Caco-2 (cell line): ENCODE measurements at regions of chr16 and their contacts with region 1.

Region 1: DNA sequence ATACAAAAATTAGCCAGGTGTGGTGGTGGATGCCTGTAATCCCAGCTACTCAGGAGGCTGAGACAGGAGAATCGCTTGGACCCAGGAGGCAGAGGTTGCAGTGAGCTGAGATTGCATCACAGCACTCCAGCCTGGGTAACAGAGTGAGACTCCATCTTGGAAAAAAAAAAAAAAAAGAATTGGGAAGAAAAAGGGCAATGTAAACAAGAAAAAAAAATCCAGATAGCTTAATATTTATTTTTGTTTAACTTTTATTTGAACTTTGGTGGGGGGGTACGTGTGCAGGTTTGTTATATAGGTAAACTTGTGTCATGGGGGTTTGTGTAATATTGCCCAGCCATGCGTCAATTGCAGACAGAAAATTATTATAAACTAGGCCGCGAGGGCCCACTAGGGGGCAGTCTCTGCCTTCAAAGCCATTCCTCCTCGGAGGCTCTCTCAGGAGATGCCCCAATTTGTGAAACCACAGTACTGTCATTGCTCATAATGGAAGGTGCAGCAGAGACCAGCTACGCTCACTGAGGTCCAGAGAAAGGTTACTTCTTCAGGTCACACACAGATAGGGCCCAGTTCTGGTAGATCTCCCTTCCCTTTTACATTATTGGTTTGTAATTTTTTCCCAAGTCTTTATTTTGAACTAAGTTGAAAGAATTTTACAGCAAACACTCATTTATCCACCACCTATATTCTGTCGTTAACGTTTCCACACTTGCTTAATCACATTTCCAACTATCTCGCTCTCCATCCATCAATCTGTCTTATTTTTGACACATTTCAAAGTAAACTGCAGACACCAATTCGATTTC is 206.2 kb downstream of the PRKCB start:
- DNase-seq: peak; percentile 56 to 73
- H3K4me3 ChIP-seq: no peak overlapping the region
- H3K4me3 Mint-ChIP-seq: no peak overlapping the region
- H3K27ac Mint-ChIP-seq: no peak overlapping the region
- H3K4me1 ChIP-seq: no peaks in the 10 kb centered on the region
- H3K4me1 Mint-ChIP-seq: no peaks in the 10 kb centered on the region
- H3K27me3 ChIP-seq: no peaks in the 10 kb centered on the region
- H3K27me3 Mint-ChIP-seq: peaks cover 2% of the 10 kb centered on the region
- CTCF ChIP-seq: peak; percentile 67 to 68

Region 2: DNA sequence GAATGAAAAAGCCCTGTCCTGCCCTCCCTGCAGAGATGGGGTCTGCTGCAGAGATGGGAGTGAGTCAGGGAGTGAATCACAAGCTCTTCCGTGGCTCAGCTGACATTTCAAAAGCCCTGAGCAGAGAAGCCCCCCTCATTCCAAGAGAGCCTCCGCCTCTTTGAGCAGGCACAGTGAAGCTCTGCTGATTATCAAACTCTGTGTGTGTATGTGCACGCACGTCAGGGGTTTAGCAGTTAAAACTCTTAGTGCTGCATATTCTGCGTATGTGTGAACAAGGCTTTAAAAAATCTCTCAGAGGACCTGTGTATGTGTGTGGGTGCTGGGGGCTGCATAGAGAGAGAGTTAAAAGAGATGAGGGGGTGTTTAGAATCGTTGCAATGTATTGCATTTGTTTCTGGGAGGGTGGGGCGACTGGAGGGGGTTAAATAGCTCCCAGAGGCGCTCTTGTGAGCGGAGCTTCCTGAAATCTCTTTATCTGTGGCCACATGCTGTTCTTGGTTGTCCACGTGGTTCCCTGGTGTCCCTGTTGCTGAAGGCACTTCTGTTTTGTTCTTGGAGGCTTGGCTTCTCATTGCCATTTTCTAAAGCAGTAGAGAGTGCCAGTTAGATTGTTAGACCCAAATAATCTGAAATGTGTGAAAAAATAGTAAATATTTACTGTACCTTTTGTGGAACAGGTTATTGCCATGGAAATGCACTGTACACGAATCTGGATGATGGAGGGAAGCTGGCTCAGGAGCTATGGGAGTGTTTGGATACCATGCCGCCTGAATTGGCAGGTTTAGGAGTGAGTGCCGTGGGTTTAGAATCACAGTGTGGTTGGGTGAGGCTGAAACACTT is 89.7 kb before region 1 on chr16:
- CTCF ChIA-PET with region 1: no interaction called
- POLR2A ChIA-PET with region 1: no interaction called
- intact Hi-C with region 1: no loop called
- DNase-seq: no peak
- H3K4me3 ChIP-seq: no peak overlapping the region
- H3K4me3 Mint-ChIP-seq: no peak overlapping the region
- H3K27ac Mint-ChIP-seq: no peak overlapping the region
- H3K4me1 ChIP-seq: no peaks in the 10 kb centered on the region
- H3K4me1 Mint-ChIP-seq: no peaks in the 10 kb centered on the region
- H3K27me3 ChIP-seq: no peaks in the 10 kb centered on the region
- H3K27me3 Mint-ChIP-seq: no peaks in the 10 kb centered on the region
- CTCF ChIP-seq: no peak

Region 3: DNA sequence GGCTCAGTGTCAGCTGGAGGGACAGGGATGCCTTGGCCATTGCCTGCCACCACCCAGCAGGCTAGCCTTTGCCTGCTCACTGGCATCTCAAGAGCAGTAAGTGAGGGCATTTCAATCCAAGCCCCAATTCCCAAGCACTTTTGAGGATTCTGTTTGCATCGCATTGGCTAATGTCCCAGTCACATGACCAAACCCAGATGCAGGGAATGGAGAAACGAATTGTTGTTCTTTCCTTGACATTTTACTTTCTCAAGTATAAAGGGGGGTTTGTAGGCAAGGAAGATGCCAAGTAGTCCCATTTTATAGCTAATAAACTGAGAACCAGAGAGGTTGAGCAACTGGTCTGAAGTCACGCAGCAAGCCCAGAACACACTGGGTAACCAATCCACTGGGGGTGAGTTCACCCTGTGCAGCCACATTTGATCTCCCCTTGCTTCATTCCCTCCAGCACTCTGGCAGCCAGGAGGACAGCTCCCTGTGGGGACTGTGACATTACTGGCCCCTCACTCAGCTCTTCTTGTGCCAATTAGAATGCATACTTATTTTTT is 20.3 kb after region 1 on chr16:
- CTCF ChIA-PET with region 1: no interaction called
- POLR2A ChIA-PET with region 1: no interaction called
- intact Hi-C with region 1: no loop called
- DNase-seq: no peak
- H3K4me3 ChIP-seq: no peak overlapping the region
- H3K4me3 Mint-ChIP-seq: no peak overlapping the region
- H3K27ac Mint-ChIP-seq: no peak overlapping the region
- H3K4me1 ChIP-seq: no peaks in the 10 kb centered on the region
- H3K4me1 Mint-ChIP-seq: no peaks in the 10 kb centered on the region
- H3K27me3 ChIP-seq: no peaks in the 10 kb centered on the region; the same call in 1 of the 2 replicates
- H3K27me3 Mint-ChIP-seq: peaks cover 12% of the 10 kb centered on the region
- CTCF ChIP-seq: no peak

Region 4: DNA sequence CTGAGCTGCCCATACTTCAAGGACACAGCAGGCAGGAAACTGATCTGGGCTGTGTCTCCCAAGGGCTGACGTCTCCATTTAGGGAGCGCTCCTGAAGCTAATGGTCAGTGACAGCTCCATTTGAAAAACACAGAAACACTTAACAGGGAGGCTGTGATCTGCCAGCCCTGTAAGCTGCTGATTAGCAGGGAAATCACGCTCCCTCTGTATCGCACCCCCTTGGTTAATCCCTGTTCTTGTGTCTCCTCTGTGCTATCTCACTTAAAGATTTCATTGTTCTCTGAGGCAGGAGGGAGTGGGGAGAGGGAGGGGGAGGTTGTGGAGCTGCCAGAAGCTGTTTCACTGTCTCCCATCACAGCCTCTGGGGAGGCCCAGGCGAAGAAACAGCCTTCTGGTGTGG is 166.7 kb after region 1 on chr16:
- CTCF ChIA-PET with region 1: no interaction called
- POLR2A ChIA-PET with region 1: no interaction called
- intact Hi-C with region 1: no loop called
- DNase-seq: no peak
- H3K4me3 ChIP-seq: no peak overlapping the region
- H3K4me3 Mint-ChIP-seq: no peak overlapping the region
- H3K27ac Mint-ChIP-seq: no peak overlapping the region
- H3K4me1 ChIP-seq: no peaks in the 10 kb centered on the region
- H3K4me1 Mint-ChIP-seq: no peaks in the 10 kb centered on the region
- H3K27me3 ChIP-seq: no peaks in the 10 kb centered on the region
- H3K27me3 Mint-ChIP-seq: peaks cover 20% of the 10 kb centered on the region
- CTCF ChIP-seq: no peak

Region 5: DNA sequence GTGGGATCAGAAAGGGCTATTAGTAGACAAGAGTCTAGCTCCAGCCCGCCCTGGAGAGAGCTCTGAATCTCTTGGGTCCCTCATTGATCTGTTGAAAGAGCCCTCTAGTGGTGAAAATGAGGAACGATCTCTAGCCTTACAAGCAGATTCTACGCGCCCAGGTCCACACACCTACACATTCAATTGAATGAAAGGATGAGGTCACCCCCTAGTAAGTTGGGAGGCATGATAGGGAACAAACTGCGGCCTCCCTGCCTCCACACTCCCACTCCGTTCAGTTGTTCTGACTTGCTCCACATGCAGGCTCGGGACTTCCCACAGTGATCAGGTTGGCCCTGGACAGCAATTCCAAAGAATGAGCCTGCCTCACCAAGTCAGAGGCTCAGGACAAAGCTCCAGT is 211.2 kb after region 1 on chr16:
- CTCF ChIA-PET with region 1: interaction called, 5 read pairs
- POLR2A ChIA-PET with region 1: no interaction called
- intact Hi-C with region 1: loop called (anchors 1 kb)
- DNase-seq: peak; percentile 34 to 40
- H3K4me3 ChIP-seq: no peak overlapping the region
- H3K4me3 Mint-ChIP-seq: no peak overlapping the region
- H3K27ac Mint-ChIP-seq: no peak overlapping the region
- H3K4me1 ChIP-seq: peaks cover 3% of the 10 kb centered on the region; the same call in 1 of the 2 replicates
- H3K4me1 Mint-ChIP-seq: no peaks in the 10 kb centered on the region
- H3K27me3 ChIP-seq: no peaks in the 10 kb centered on the region
- H3K27me3 Mint-ChIP-seq: no peaks in the 10 kb centered on the region
- CTCF ChIP-seq: peak; percentile 53 to 85

Region 6: GRCh38 chr16:24409049-24409448 is 367.0 kb after region 1 on chr16:
- CTCF ChIA-PET with region 1: no interaction called
- POLR2A ChIA-PET with region 1: no interaction called
- intact Hi-C with region 1: loop called (anchors 10 kb)
- DNase-seq: peak in 1 of 2 experiments; percentile 7
- H3K4me3 ChIP-seq: no peak overlapping the region
- H3K4me3 Mint-ChIP-seq: no peak overlapping the region
- H3K27ac Mint-ChIP-seq: no peak overlapping the region
- H3K4me1 ChIP-seq: no peaks in the 10 kb centered on the region
- H3K4me1 Mint-ChIP-seq: no peaks in the 10 kb centered on the region
- H3K27me3 ChIP-seq: no peaks in the 10 kb centered on the region
- H3K27me3 Mint-ChIP-seq: no peaks in the 10 kb centered on the region
- CTCF ChIP-seq: peak in 1 of 2 experiments; percentile 31